ENCODE measurements at regions of chr11 and their contacts with region 1.

Region 1: GRCh38 chr11:7278314-7278917 is 26.7 kb downstream of the SYT9 start:
- DNase-seq: no peak
- ATAC-seq: peak; percentile 82 to 89 (median 84)
- H3K4me3 ChIP-seq: no peak overlapping the region
- H3K27ac ChIP-seq: no peak overlapping the region
- H3K4me1 ChIP-seq: peaks cover 0 to 4% (median 0%) of the 10 kb centered on the region in 4 donors
- H3K27me3 ChIP-seq: no peaks in the 10 kb centered on the region
- CTCF ChIP-seq: peak; percentile 66 to 76 (median 69)
- POLR2A ChIP-seq: no peak

Region 2: GRCh38 chr11:6627762-6628241 is 650.6 kb before region 1 on chr11:
- intact Hi-C with region 1: no loop called
- DNase-seq: no peak
- ATAC-seq: no peak
- H3K4me3 ChIP-seq: no peak overlapping the region
- H3K27ac ChIP-seq: no peak overlapping the region
- H3K4me1 ChIP-seq: no peaks in the 10 kb centered on the region
- H3K27me3 ChIP-seq: no peaks in the 10 kb centered on the region
- CTCF ChIP-seq: no peak
- POLR2A ChIP-seq: no peak

Region 3: GRCh38 chr11:7143908-7144307 is 134.5 kb before region 1 on chr11:
- intact Hi-C with region 1: loop called in 1 of 2 experiments (anchors 10 kb)
- DNase-seq: no peak
- ATAC-seq: peak; percentile 50 to 68 (median 65)
- H3K4me3 ChIP-seq: no peak overlapping the region
- H3K27ac ChIP-seq: no peak overlapping the region
- H3K4me1 ChIP-seq: no peaks in the 10 kb centered on the region
- H3K27me3 ChIP-seq: no peaks in the 10 kb centered on the region
- CTCF ChIP-seq: peak; percentile 45 to 63 (median 56)
- POLR2A ChIP-seq: no peak

Measured in right lobe of liver (tissue), 6 donors.